CD4-positive, alpha-beta memory T cell (primary cell): ENCODE measurements at regions of chr11 and their contacts with region 1.

Region 1: GRCh38 chr11:47511917-47512316 is 41.0 kb downstream of the CELF1 start:
- DNase-seq: no peak
- H3K4me3 ChIP-seq: no peak overlapping the region
- H3K4me3 Mint-ChIP-seq: peak overlapping the region in 3 of 8 donors; percentile 15 to 26 (median 17)
- H3K27ac ChIP-seq: no peak overlapping the region
- H3K27ac Mint-ChIP-seq: peak overlapping the region in 6 of 7 donors; percentile 34 to 81 (median 69)
- H3K4me1 ChIP-seq: peaks cover 94% of the 10 kb centered on the region
- H3K4me1 Mint-ChIP-seq: peaks cover 55 to 93% (median 74%) of the 10 kb centered on the region in 4 donors
- H3K27me3 ChIP-seq: no peaks in the 10 kb centered on the region
- H3K27me3 Mint-ChIP-seq: no peaks in the 10 kb centered on the region

Region 2: GRCh38 chr11:47523468-47524225 is 11.7 kb after region 1 on chr11:
- CTCF ChIA-PET with region 1: interaction called, 4 read pairs
- POLR2A ChIA-PET with region 1: interaction called, 6 read pairs
- intact Hi-C with region 1: loop called (anchors 1 kb)
- DNase-seq: peak in 4 of 5 donors; percentile 32 to 74 (median 48)
- H3K4me3 ChIP-seq: peak overlapping the region in 1 of 2 donors; percentile 8
- H3K4me3 Mint-ChIP-seq: peak overlapping the region; percentile 28 to 81 (median 67)
- H3K27ac ChIP-seq: peak overlapping the region; percentile 55
- H3K27ac Mint-ChIP-seq: peak overlapping the region; percentile 69 to 92 (median 89)
- H3K4me1 ChIP-seq: peaks cover 72% of the 10 kb centered on the region
- H3K4me1 Mint-ChIP-seq: peaks cover 50 to 86% (median 67%) of the 10 kb centered on the region in 4 donors
- H3K27me3 ChIP-seq: no peaks in the 10 kb centered on the region
- H3K27me3 Mint-ChIP-seq: no peaks in the 10 kb centered on the region